ENCODE measurements at regions of chr5 and their contacts with region 1.

Region 1: GRCh38 chr5:155136216-155136850 is 122.8 kb downstream of the KIF4B start:
- DNase-seq: no peak
- H3K4me3 ChIP-seq: no peak overlapping the region
- H3K27ac ChIP-seq: no peak overlapping the region
- H3K27me3 ChIP-seq: no peaks in the 10 kb centered on the region
- CTCF ChIP-seq: no peak

Region 2: GRCh38 chr5:155091768-155092717 is 44.3 kb before region 1 on chr5:
- CTCF ChIA-PET with region 1: interaction called, 12 read pairs
- POLR2A ChIA-PET with region 1: no interaction called
- DNase-seq: no peak
- H3K4me3 ChIP-seq: no peak overlapping the region
- H3K27ac ChIP-seq: no peak overlapping the region
- H3K27me3 ChIP-seq: no peaks in the 10 kb centered on the region
- CTCF ChIP-seq: no peak

Region 3: DNA sequence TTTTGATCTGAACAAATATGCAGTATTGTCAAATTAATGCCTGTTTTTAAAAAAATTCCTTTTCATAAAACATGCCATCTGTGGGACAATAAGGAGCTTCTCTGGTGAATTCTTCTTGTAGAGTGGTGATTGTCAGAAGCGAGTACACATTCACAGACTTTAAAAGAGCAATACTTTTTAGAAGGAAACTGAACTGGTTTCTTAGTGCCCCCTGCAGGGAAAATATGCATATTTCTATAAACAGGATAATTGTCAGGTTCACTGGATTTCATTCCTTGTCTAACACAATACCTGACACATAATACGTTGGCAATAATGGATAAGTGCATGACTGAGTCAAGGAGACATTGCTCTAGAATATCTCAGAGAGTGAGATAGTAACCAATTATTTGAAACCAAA is 10.9 kb after region 1 on chr5:
- CTCF ChIA-PET with region 1: interaction called, 42 read pairs
- POLR2A ChIA-PET with region 1: no interaction called
- DNase-seq: no peak
- H3K4me3 ChIP-seq: no peak overlapping the region
- H3K27ac ChIP-seq: no peak overlapping the region
- H3K27me3 ChIP-seq: no peaks in the 10 kb centered on the region
- CTCF ChIP-seq: 0 out of 2 replicates have a peak, but pooled peaks have one; percentile 17

Region 4: GRCh38 chr5:155154973-155155372 is 18.6 kb after region 1 on chr5:
- CTCF ChIA-PET with region 1: interaction called, 12 read pairs
- POLR2A ChIA-PET with region 1: no interaction called
- DNase-seq: no peak
- H3K4me3 ChIP-seq: no peak overlapping the region
- H3K27ac ChIP-seq: no peak overlapping the region
- H3K27me3 ChIP-seq: no peaks in the 10 kb centered on the region
- CTCF ChIP-seq: no peak

Region 5: DNA sequence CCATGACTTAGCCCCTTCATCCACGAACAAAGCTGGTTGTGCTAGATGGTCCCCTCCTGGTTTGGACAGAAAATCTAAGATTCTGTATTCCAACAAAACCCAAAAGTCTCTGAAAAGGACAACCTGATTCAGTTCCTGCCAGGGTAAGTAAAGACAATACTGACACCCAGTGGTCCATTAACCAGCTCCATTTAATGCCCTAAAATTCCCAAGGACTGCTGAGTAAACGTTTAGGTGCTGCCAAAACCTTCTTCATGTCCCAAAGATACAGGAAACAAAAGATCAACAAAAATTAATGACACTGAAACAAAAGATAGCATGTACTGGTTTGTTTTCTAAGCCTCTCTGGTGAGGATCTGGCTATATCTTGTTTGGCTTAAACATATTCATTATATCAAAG is 1688.5 kb after region 1 on chr5:
- CTCF ChIA-PET with region 1: interaction called, 10 read pairs
- POLR2A ChIA-PET with region 1: no interaction called
- DNase-seq: peak; percentile 8
- H3K4me3 ChIP-seq: no peak overlapping the region
- H3K27ac ChIP-seq: no peak overlapping the region
- H3K27me3 ChIP-seq: no peaks in the 10 kb centered on the region
- CTCF ChIP-seq: peak; percentile 47

Region 6: DNA sequence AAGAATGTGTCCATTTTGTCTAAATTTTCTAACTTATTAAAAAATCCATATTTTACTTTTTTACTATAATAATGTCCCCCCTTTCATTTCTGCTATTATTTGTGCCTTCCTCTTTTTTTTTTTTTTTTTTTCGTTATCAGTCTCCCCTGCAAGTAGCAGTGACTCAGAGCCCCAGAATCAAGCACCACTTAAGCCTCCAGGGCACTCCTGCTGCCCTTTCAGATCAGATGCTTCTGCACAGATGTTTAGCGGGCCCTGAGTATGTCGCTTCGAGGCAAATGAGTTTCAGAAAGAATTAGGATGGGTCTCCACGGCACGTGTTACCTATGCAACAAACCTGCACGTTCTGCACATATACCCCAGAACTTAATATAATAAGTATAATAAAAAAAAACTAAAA is 1994.6 kb after region 1 on chr5:
- CTCF ChIA-PET with region 1: interaction called, 56 read pairs
- POLR2A ChIA-PET with region 1: no interaction called
- DNase-seq: no peak
- H3K4me3 ChIP-seq: no peak overlapping the region
- H3K27ac ChIP-seq: no peak overlapping the region
- H3K27me3 ChIP-seq: no peaks in the 10 kb centered on the region
- CTCF ChIP-seq: no peak

Measured in AG04450 (cell line).